Panc1 (cell line): ENCODE measurements at regions of chr18 and their contacts with region 1.

Region 1: DNA sequence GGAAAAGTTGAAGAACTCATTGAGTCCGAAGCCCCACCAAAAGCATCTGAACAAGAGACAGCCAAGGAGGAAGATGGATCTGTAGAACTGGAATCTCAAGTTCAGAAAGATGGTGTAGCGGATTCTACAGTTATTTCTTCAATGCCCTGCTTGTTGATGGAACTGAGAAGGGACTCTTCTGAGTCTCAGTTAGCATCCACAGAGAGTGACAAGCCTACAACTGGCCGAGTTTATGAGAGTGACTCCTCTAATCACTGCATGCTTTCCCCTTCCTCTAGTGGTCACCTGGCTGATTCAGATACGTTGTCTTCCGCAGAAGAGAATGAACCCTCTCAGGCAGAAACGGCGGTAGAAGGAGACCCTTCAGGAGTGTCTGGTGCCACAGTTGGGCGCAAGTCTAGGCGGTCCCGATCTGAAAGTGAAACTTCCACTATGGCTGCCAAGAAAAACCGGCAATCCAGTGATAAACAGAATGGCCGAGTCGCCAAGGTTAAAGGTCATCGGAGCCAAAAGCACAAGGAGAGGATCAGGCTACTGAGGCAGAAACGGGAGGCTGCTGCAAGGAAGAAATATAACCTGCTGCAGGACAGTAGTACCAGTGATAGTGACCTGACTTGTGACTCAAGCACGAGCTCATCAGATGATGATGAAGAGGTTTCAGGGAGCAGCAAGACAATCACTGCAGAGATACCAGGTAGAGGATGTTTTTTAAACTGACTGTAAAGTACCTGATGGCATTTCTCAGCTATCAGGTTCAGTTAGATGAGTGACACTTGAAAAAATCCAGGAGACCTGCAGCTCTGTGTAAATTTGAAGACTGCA is 111.9 kb downstream of the HAUS1 start:
- DNase-seq: no peak
- ATAC-seq: peak; percentile 62; the same call in 1 of the 2 replicates
- H3K4me3 ChIP-seq: peak overlapping the region; percentile 14 to 50; a peak in 3 of 4 replicates
- H3K27ac ChIP-seq: peak overlapping the region; percentile 44; the same call in 1 of the 2 replicates
- H3K4me1 ChIP-seq: no peaks in the 10 kb centered on the region; the same call in 1 of the 2 replicates
- H3K27me3 ChIP-seq: no peaks in the 10 kb centered on the region
- CTCF ChIP-seq: no peak

Region 2: DNA sequence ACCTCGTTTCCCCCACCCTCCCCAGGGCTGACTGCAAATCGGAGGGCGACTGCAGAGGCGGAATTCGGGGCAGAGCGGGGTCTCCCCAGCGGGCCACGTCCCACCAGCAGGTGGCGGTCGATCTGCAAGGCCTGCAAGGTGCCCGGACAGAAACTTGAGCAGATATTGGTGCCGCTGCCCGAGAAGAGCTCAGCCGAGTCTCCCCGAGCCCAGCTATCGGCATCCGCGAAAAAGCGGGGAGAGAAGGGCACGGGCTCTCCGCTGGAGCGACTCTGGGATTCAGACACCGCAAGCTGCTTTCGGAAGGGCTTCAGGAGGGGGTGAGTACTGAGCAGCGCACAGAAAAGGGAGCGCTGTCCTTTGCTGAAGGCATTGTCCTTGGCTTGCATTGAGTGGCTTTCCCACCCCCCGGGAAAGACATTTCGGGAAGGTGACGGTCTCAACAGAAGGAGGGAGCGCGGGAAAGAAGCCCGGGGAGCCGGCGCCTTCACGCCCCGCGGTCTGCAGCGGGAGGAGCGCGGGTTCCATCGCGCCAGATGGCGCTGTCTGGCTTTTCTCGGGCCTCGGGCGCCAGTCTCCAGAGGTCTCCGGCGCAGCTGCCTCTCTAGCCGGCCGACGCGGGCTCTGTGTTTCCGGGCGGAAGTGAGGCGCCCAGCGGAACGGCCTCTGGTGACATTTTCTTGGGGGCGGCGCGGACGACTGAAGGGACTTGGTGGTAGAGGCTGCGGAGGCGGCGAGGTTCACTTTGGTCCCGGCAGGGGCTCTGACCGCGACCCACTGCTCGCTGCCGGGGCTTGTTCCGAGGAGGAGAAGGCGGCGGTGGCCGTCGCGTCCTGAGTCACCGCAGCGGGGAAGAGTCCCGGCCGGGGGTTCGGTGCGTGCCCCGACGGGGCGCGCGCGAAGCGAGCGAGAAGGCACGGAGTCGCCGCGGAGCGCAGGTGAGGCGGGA is 42.4 kb before region 1 on chr18:
- CTCF ChIA-PET with region 1: interaction called, 8 read pairs
- POLR2A ChIA-PET with region 1: no interaction called
- in situ Hi-C with region 1: no loop called
- intact Hi-C with region 1: loop called (anchors 5 kb)
- DNase-seq: peak; percentile 69
- ATAC-seq: peak; percentile 97
- H3K4me3 ChIP-seq: peak overlapping the region; percentile 79 to 86
- H3K27ac ChIP-seq: peak overlapping the region; percentile 74
- H3K4me1 ChIP-seq: peaks cover 8% of the 10 kb centered on the region; the same call in 1 of the 2 replicates
- H3K27me3 ChIP-seq: no peaks in the 10 kb centered on the region
- CTCF ChIP-seq: peak; percentile 87